Naive thymus-derived CD4-positive, alpha-beta T cell (primary cell): ENCODE measurements at regions of chr3 and their contacts with region 1.

Region 1: GRCh38 chr3:52798978-52799476 is 4.4 kb downstream of the ITIH3 start:
- DNase-seq: no peak
- ATAC-seq: peak; percentile 52
- H3K4me3 ChIP-seq: no peak overlapping the region
- H3K4me3 Mint-ChIP-seq: no peak overlapping the region
- H3K27ac ChIP-seq: no peak overlapping the region
- H3K27ac Mint-ChIP-seq: no peak overlapping the region
- H3K4me1 ChIP-seq: no peaks in the 10 kb centered on the region
- H3K4me1 Mint-ChIP-seq: peaks cover 0 to 8% (median 0%) of the 10 kb centered on the region in 7 donors
- H3K27me3 ChIP-seq: no peaks in the 10 kb centered on the region
- H3K27me3 Mint-ChIP-seq: peaks cover 0 to 5% (median 0%) of the 10 kb centered on the region in 5 donors

Region 2: DNA sequence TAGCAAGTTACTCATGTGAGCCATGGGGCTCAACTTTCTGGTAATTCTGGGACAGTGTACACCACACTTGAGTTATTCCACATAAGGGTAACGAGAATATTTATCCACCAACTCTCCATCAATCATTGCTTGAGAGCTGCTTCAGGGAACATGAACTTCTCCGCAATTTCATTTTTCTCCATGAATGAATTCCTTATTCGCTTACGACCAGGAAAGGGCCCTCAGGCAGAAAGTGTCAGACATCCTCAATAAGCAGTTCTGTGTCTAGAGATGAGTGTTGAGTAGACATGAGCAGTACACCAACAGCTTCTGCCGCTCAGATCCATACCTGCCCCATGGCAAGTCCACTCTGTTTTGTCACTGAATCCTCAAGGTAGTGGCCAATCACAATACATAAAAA is 962.4 kb before region 1 on chr3:
- CTCF ChIA-PET with region 1: no interaction called
- POLR2A ChIA-PET with region 1: no interaction called
- intact Hi-C with region 1: no loop called
- DNase-seq: no peak
- ATAC-seq: no peak
- H3K4me3 ChIP-seq: no peak overlapping the region
- H3K4me3 Mint-ChIP-seq: no peak overlapping the region
- H3K27ac ChIP-seq: no peak overlapping the region
- H3K27ac Mint-ChIP-seq: no peak overlapping the region
- H3K4me1 ChIP-seq: no peaks in the 10 kb centered on the region
- H3K4me1 Mint-ChIP-seq: peaks cover 0 to 2% (median 0%) of the 10 kb centered on the region in 7 donors
- H3K27me3 ChIP-seq: peaks cover 0 to 4% of the 10 kb centered on the region in 2 donors
- H3K27me3 Mint-ChIP-seq: peaks cover 24 to 43% (median 33%) of the 10 kb centered on the region in 5 donors

Region 3: DNA sequence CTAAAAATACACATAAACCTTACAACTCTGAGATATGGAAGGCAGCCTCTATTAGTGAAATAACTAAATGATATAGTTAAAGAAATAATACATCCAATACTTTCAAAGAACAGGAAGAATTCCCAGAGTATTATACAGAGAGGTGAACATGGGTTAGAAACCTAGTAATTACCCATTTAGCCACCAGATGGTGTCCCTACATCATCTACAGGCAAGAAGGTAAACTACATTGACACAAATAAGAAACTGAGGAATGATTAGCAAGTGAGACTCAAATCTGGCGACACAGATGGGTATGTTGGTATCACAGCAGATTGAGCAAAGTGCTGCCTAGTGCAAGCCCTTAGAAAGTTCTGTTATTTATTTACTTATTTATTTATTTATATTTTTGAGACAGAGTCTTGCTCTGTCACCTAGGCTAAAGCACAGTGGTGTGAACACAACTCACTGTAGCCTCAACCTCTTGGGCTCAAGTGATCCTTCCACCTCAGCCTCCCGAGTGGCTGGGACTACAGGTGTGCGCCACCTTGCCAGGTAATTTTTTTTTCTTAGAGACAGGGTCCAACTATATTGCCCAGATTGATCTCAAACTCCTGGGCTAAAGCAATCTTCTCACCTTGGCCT is 56.5 kb before region 1 on chr3:
- CTCF ChIA-PET with region 1: no interaction called
- POLR2A ChIA-PET with region 1: no interaction called
- intact Hi-C with region 1: loop called in 1 of 2 experiments (anchors 2 kb)
- DNase-seq: peak in 5 of 9 donors; percentile 18 to 35 (median 20)
- ATAC-seq: peak; percentile 50
- H3K4me3 ChIP-seq: no peak overlapping the region
- H3K4me3 Mint-ChIP-seq: no peak overlapping the region
- H3K27ac ChIP-seq: no peak overlapping the region
- H3K27ac Mint-ChIP-seq: no peak overlapping the region
- H3K4me1 ChIP-seq: no peaks in the 10 kb centered on the region
- H3K4me1 Mint-ChIP-seq: peaks cover 0 to 2% (median 0%) of the 10 kb centered on the region in 7 donors
- H3K27me3 ChIP-seq: no peaks in the 10 kb centered on the region
- H3K27me3 Mint-ChIP-seq: no peaks in the 10 kb centered on the region